ENCODE measurements at regions of chr2 and their contacts with region 1.

Region 1: GRCh38 chr2:189674374-189675112 is at the start of gene ANKAR:
- DNase-seq: peak; percentile 80 to 86 (median 83)
- H3K4me3 ChIP-seq: peak within 1 kb of the TSS; percentile 42 to 77
- H3K4me3 Mint-ChIP-seq: peak within 1 kb of the TSS; percentile 95 to 98 (median 96)
- H3K27ac ChIP-seq: peak within 1 kb of the TSS; percentile 90
- H3K27ac Mint-ChIP-seq: peak within 1 kb of the TSS; percentile 96 to 99 (median 99)
- H3K4me1 ChIP-seq: peaks cover 21% of the 10 kb centered on the region
- H3K4me1 Mint-ChIP-seq: peaks cover 27 to 49% (median 40%) of the 10 kb centered on the region in 4 donors
- H3K27me3 ChIP-seq: no peaks in the 10 kb centered on the region
- H3K27me3 Mint-ChIP-seq: no peaks in the 10 kb centered on the region
- total RNA-seq, gene ANKAR: 18.4 to 20.2 TPM

Region 2: GRCh38 chr2:189685540-189686229 is 11.1 kb after region 1 on chr2:
- CTCF ChIA-PET with region 1: interaction called, 29 read pairs
- POLR2A ChIA-PET with region 1: interaction called, 6 read pairs
- intact Hi-C with region 1: loop called (anchors 2 kb)
- DNase-seq: no peak
- H3K4me3 ChIP-seq: no peak overlapping the region
- H3K4me3 Mint-ChIP-seq: no peak overlapping the region
- H3K27ac ChIP-seq: no peak overlapping the region
- H3K27ac Mint-ChIP-seq: peak overlapping the region in 2 of 7 donors; percentile 68 to 70
- H3K4me1 ChIP-seq: peaks cover 14% of the 10 kb centered on the region
- H3K4me1 Mint-ChIP-seq: peaks cover 13 to 23% (median 18%) of the 10 kb centered on the region in 4 donors
- H3K27me3 ChIP-seq: no peaks in the 10 kb centered on the region
- H3K27me3 Mint-ChIP-seq: no peaks in the 10 kb centered on the region

Region 3: DNA sequence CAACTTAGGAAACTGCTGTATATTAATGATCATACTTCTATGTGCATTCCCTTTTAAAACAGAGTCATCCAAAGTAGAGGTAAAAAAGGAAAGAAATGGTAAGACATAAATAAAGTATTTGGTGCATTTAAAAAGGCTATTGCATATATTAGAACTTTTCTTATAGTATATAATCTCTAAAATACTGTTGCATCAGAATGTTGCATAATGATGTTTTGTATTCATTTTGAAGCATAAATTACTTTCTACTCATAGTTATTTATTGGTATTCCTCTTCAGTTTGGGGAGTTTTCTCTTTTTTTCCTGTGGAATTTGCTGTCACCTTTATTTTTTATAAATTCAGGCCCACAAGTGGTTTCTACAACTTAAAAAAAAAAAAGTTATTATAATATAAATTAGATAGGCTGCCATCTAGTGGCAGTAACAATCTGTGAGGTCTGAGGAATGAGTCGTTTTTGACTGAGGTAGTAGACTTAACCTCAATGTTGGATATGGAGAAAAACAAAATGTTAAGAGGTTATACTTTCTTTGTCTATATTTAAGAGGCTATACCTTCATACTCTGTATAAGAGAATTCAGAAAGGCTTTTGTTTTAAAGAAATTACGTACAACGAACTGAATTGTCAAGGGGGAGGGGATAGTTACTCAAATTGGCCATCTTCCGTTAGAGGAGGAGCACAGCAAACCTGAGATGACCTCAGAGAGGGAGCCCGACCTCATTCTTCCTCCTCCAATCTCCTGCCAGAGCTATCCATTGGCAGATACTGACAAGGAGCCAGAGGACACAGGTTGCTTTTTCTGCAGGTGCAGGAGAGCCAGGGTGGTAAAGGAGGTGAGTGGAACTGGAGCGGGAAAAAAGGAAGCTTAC is 23.7 kb after region 1 on chr2:
- CTCF ChIA-PET with region 1: interaction called, 69 read pairs
- POLR2A ChIA-PET with region 1: interaction called, 8 read pairs
- intact Hi-C with region 1: loop called (anchors 1 kb)
- DNase-seq: peak; percentile 40 to 50 (median 48)
- H3K4me3 ChIP-seq: no peak overlapping the region
- H3K4me3 Mint-ChIP-seq: no peak overlapping the region
- H3K27ac ChIP-seq: no peak overlapping the region
- H3K27ac Mint-ChIP-seq: peak overlapping the region in 2 of 7 donors; percentile 3 to 36
- H3K4me1 ChIP-seq: no peaks in the 10 kb centered on the region
- H3K4me1 Mint-ChIP-seq: no peaks in the 10 kb centered on the region
- H3K27me3 ChIP-seq: no peaks in the 10 kb centered on the region
- H3K27me3 Mint-ChIP-seq: no peaks in the 10 kb centered on the region

Measured in CD4-positive, alpha-beta memory T cell (primary cell).